ENCODE measurements at regions of chr1 and their contacts with region 1.

Region 1: GRCh38 chr1:207941665-207942064 is 30.7 kb upstream of the CD34 start:
- DNase-seq: no peak
- ATAC-seq: no peak
- H3K4me3 ChIP-seq: no peak overlapping the region
- H3K27ac ChIP-seq: no peak overlapping the region
- H3K4me1 ChIP-seq: peaks cover 20% of the 10 kb centered on the region
- H3K27me3 ChIP-seq: no peaks in the 10 kb centered on the region
- CTCF ChIP-seq: no peak

Region 2: GRCh38 chr1:207876131-207876530 is 65.5 kb before region 1 on chr1:
- CTCF ChIA-PET with region 1: no interaction called
- POLR2A ChIA-PET with region 1: no interaction called
- intact Hi-C with region 1: no loop called
- DNase-seq: no peak
- ATAC-seq: 0 out of 2 replicates have a peak, but pooled peaks have one; percentile 38
- H3K4me3 ChIP-seq: no peak overlapping the region
- H3K27ac ChIP-seq: no peak overlapping the region
- H3K4me1 ChIP-seq: no peaks in the 10 kb centered on the region
- H3K27me3 ChIP-seq: no peaks in the 10 kb centered on the region
- CTCF ChIP-seq: peak; percentile 48

Region 3: DNA sequence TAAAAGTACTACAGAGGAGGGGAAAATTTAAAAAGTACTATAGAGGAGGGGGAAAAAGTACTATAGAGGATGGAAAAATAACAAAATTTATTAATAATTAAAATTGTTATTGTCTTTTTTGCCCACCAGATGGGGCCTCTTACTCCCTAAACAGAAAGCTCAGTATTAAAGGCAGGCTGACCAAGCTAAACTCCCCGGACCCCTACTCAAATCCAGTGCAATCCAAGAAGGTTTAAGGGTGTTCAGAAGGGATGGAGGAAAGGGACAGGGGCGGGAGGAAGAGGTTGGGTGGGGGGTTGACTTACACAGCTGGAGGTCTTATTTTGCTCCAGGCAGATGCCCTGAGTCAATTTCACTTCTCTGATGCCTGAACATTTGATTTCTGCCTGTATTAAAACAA is 44.5 kb before region 1 on chr1:
- CTCF ChIA-PET with region 1: interaction called, 13 read pairs
- POLR2A ChIA-PET with region 1: no interaction called
- intact Hi-C with region 1: no loop called
- DNase-seq: peak; percentile 52
- ATAC-seq: peak; percentile 53
- H3K4me3 ChIP-seq: no peak overlapping the region
- H3K27ac ChIP-seq: no peak overlapping the region
- H3K4me1 ChIP-seq: no peaks in the 10 kb centered on the region
- H3K27me3 ChIP-seq: no peaks in the 10 kb centered on the region
- CTCF ChIP-seq: peak; percentile 57

Region 4: GRCh38 chr1:208318150-208318734 is 376.6 kb after region 1 on chr1:
- CTCF ChIA-PET with region 1: no interaction called
- POLR2A ChIA-PET with region 1: no interaction called
- intact Hi-C with region 1: no loop called
- DNase-seq: peak; percentile 49
- ATAC-seq: no peak
- H3K4me3 ChIP-seq: no peak overlapping the region
- H3K27ac ChIP-seq: no peak overlapping the region
- H3K4me1 ChIP-seq: no peaks in the 10 kb centered on the region
- H3K27me3 ChIP-seq: peaks cover 44% of the 10 kb centered on the region
- CTCF ChIP-seq: no peak